Activated naive CD8-positive, alpha-beta T cell treated with anti-CD3 and anti-CD28 coated beads, Interleukin-2, amount 10 ng/mL, durations not matched to agents 7 days and 5 days (primary cell): ENCODE measurements at regions of chr12 and their contacts with region 1.

Region 1: DNA sequence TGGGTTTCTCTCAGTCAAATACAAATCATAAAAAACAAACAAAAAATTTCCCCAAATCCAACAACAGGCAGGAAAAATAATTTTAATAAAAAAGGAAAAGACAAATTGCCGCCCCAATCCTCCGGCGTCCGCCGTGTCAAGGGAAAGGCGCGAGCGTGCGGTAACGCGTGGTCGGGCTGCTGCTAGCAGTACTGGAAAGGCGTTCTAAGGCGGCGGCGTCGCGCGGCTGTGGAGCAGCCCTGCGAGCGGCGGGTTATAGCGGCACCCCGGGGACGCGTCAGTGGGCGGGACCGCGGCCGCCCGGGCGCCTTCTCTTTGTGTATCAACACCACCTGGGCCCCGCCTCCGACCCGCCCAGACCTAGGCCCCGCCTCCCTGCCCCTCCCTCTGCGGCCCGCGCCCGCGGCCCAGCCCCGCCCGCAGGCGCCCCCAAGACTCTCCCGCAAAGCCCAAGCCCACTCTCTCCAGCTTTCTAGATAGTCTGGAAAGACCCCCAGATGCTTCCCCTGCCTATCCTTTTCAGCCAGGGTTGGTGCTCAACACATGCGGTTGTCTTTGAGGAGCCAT is at the start of gene SLC38A2:
- DNase-seq: peak; percentile 98
- ATAC-seq: peak; percentile 81
- H3K4me3 Mint-ChIP-seq: peak within 1 kb of the TSS; percentile 95
- H3K27ac Mint-ChIP-seq: peak within 1 kb of the TSS; percentile 96
- H3K4me1 Mint-ChIP-seq: peaks cover 38% of the 10 kb centered on the region
- H3K27me3 Mint-ChIP-seq: no peaks in the 10 kb centered on the region
- total RNA-seq, gene SLC38A2: 227 to 253 TPM

Region 2: DNA sequence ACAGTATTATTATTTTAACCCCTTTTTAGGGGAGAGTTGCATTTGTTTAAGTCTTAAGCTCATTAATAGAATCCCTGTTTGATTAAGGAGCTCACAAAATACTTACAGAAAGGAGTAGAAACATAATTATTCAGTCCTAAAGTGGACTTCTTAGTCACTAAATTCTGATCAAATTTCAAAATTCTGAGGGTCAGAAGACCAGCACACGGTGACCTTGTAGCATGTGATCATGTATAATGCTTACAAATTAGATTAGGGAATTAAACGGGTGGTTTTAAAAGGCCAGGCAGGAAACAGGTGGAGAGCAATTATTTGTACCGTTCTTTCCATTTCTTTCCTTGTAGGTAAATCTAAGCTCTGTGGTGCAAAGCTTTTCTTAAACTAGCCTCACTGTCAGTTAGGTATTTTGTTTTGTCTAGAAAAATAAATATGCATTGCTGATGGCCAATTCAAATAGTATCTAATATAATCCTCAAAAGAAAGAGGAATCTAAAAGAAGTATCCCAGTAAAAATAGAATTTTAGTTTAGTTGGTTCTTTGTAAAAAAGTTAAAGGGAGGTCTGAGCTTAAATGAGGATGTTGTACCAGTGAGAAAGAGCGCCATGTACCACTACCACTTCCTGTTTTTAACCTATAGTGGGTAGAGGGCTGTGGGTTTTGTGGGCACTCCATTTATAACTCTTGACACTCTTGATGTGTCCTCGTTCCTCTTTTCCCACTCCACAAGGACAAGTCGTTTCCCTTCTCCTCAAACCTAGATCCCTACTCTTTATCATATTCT is 154.9 kb before region 1 on chr12:
- POLR2A ChIA-PET with region 1: interaction called, 10 read pairs
- DNase-seq: peak; percentile 47
- ATAC-seq: no peak
- H3K4me3 Mint-ChIP-seq: peak overlapping the region; percentile 75
- H3K27ac Mint-ChIP-seq: peak overlapping the region; percentile 93
- H3K4me1 Mint-ChIP-seq: peaks cover 86% of the 10 kb centered on the region
- H3K27me3 Mint-ChIP-seq: no peaks in the 10 kb centered on the region

Region 3: DNA sequence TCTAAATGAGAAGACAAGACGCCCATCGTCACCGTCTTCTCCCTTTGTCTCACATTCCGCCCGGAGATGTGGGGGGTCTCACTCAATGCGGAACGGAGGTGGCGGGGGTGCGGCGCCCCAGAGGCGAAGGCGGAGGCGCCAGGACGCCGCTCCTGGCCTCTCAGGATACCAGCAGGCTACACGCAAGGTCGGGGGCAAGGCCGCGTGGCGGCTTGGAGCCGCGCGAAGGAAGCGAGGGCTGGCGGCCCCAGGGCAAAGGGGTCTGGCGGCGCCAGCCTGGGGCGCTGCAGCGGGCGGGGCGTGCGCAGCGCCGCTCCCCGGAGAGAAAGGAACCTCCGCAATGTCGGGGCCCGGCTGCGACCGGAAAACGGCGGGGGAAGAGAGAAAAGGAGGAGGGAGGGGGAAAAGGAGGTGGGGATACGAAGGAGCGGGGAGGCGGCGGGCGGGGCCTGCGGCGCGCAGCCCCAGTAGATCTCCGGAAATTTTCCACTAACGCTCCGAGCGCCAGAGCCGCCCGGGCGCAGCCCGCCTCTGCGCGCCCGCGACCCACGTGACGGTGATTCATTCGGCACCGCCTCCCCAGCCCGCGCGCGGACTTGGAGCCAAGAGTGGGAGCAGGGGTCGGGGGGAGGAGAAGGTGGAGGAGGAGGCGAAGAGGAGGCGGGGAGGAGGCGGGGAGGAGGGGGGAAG is 10.5 kb after region 1 on chr12:
- POLR2A ChIA-PET with region 1: interaction called, 62 read pairs
- DNase-seq: peak; percentile 95
- ATAC-seq: peak; percentile 87
- H3K4me3 Mint-ChIP-seq: peak overlapping the region; percentile 93
- H3K27ac Mint-ChIP-seq: peak overlapping the region; percentile 92
- H3K4me1 Mint-ChIP-seq: peaks cover 40% of the 10 kb centered on the region
- H3K27me3 Mint-ChIP-seq: peaks cover 3% of the 10 kb centered on the region

Region 4: GRCh38 chr12:46459861-46460545 is 87.4 kb after region 1 on chr12:
- POLR2A ChIA-PET with region 1: interaction called, 16 read pairs
- DNase-seq: peak; percentile 38
- ATAC-seq: peak; percentile 41
- H3K4me3 Mint-ChIP-seq: peak overlapping the region; percentile 87
- H3K27ac Mint-ChIP-seq: peak overlapping the region; percentile 95
- H3K4me1 Mint-ChIP-seq: peaks cover 52% of the 10 kb centered on the region
- H3K27me3 Mint-ChIP-seq: no peaks in the 10 kb centered on the region

Region 5: GRCh38 chr12:46516933-46517578 is 144.4 kb after region 1 on chr12:
- POLR2A ChIA-PET with region 1: interaction called, 20 read pairs
- DNase-seq: no peak
- ATAC-seq: peak; percentile 93
- H3K4me3 Mint-ChIP-seq: peak overlapping the region; percentile 70
- H3K27ac Mint-ChIP-seq: peak overlapping the region; percentile 94
- H3K4me1 Mint-ChIP-seq: peaks cover 49% of the 10 kb centered on the region
- H3K27me3 Mint-ChIP-seq: no peaks in the 10 kb centered on the region

Region 6: DNA sequence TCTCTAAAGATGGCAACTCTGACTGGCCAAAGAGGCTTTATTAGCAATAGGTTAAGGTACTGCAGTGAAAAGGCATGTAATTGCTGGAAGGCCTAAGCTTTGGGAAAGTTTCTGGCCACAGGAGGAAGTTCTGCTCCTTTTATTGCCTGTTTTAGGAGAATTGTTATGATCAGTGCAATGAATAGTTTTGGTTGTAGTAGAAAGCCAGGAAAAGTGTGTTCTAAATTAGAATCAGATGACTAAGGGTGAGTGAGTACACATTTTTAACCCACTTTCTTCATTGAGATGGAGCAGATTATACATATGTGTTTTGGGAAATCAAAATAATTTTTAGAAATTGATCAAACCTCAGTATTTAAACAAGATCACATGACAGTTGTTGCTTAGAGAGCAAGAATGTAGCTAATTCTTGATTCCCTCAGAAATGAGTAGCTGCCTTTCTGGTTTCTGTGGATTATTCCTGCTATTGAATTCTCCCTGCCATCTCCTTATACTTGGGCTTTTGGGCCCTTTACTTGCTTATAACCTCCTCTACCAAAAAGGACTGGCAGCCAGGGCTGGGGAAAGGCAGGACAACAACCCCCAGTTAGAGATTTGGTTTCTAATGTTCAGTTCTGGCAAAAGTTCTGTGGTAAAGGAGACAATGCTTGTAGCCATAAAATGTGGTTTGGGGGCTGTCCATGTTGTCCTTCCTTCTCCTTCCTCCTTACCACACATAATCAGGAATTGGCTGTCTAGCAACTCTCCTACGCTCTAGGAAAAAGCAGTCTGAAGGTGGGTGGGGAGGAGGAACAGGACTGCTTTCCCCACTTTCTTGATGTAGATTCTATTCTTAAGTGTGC is 236.0 kb after region 1 on chr12:
- POLR2A ChIA-PET with region 1: interaction called, 11 read pairs
- DNase-seq: no peak
- ATAC-seq: peak; percentile 11
- H3K4me3 Mint-ChIP-seq: peak overlapping the region; percentile 74
- H3K27ac Mint-ChIP-seq: peak overlapping the region; percentile 87
- H3K4me1 Mint-ChIP-seq: peaks cover 25% of the 10 kb centered on the region
- H3K27me3 Mint-ChIP-seq: no peaks in the 10 kb centered on the region